T-cell (primary cell): ENCODE measurements at regions of chr3 and their contacts with region 1.

Region 1: DNA sequence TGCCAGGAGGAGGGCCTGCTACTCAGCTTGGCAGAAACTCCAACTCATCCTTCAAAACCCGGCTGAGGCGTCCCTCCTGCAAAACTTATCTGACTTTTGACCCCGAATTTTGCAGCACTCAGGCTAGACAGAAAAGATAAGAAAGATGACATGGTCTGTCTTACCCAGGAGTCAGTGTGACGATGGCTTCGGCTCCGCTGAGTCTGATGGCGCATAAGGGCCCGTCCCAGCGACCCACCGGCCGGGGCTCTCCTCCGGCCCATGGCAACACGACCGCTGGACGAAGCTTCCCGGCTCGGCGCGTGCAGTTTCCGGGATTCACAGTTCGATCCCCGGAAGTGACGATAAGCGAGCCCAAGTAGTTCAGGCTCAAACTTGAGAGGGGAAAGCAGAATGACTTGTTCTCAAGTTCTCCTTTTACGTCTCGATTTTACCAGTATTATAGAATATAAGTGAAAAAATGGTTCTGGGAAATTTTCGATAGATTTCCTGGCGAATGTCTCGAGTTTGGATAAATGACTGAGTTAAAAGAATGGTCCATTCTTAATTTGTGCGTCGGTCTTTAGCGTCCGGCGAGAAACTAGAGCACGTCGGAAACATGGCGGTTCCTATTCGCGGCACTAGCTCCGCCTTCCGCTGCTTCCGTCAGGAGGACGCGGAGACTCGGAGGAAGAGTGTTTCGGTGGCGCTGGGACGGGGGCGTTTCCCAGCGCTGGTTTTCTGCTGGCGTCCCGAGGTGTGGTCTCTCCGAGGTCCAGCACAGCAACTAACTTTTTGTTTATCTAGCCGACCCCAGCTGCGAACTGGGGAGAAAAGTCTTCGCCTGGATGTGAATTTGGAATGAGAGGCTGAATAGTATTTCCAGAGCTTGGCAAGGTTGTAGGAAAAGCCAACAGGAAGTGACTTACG is at the start of gene LSG1:
- DNase-seq: peak; percentile 77 to 97 (median 87)
- ATAC-seq: peak; percentile 95 to 96 (median 96)
- H3K4me3 ChIP-seq: peak within 1 kb of the TSS; percentile 68 to 95
- H3K4me3 Mint-ChIP-seq: peak within 1 kb of the TSS; percentile 98 to 99 (median 99)
- H3K27ac ChIP-seq: peak within 1 kb of the TSS; percentile 90
- H3K27ac Mint-ChIP-seq: peak within 1 kb of the TSS; percentile 98 to 99
- H3K4me1 ChIP-seq: peaks cover 10 to 14% of the 10 kb centered on the region in 2 experiments
- H3K4me1 Mint-ChIP-seq: peaks cover 39 to 45% (median 42%) of the 10 kb centered on the region in 3 donors
- H3K27me3 ChIP-seq: no peaks in the 10 kb centered on the region
- H3K27me3 Mint-ChIP-seq: peaks cover 0 to 5% of the 10 kb centered on the region in 2 donors
- total RNA-seq, gene LSG1: 40.0 to 83.5 (median 49.5) TPM

Region 2: DNA sequence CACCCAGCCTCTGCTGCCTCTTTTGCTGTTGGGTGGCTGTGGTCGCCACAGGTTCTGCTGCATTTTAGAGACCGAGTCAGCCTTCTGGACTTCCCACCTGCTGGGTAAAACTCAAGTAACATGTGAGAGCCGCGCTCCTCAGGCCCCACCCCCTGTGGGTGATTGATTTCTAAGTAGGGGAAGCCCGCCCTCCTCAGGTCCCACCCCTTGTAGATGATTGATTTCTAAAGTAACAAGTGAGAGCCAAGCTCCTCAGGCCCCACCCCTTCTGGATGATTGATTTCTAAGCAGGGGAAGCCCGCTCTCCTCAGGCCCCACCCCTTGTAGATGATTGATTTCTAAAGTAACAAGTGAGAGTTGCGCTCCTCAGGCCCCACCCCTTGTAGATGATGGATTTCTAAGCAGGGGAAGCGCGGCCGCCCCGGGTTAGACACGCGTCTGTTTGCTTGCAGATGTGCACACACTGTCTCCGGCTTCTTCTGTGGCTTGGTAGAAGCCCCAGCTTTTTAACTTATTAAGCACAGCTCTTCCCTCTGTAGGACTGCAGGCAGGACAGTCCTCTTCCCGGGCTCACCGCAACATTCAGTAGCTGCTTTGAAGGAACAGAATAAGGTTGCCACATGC is 97.0 kb after region 1 on chr3:
- CTCF ChIA-PET with region 1: interaction called in 1 of 2 experiments, 16 read pairs
- POLR2A ChIA-PET with region 1: no interaction called
- DNase-seq: peak; percentile 79 to 97 (median 92)
- ATAC-seq: peak; percentile 96 to 98 (median 98)
- H3K4me3 ChIP-seq: peak overlapping the region; percentile 38 to 54
- H3K4me3 Mint-ChIP-seq: peak overlapping the region; percentile 81 to 84 (median 83)
- H3K27ac ChIP-seq: peak overlapping the region; percentile 79
- H3K27ac Mint-ChIP-seq: peak overlapping the region; percentile 93 to 94
- H3K4me1 ChIP-seq: peaks cover 4 to 10% of the 10 kb centered on the region in 2 experiments
- H3K4me1 Mint-ChIP-seq: peaks cover 21 to 30% (median 25%) of the 10 kb centered on the region in 3 donors
- H3K27me3 ChIP-seq: peaks cover 0 to 19% of the 10 kb centered on the region in 2 experiments
- H3K27me3 Mint-ChIP-seq: peaks cover 8 to 11% of the 10 kb centered on the region in 2 donors

Region 3: GRCh38 chr3:195259475-195260279 is 587.5 kb after region 1 on chr3:
- CTCF ChIA-PET with region 1: interaction called, 7 to 12 read pairs
- POLR2A ChIA-PET with region 1: interaction called in 1 of 2 experiments, 3 read pairs
- DNase-seq: peak; percentile 75 to 93 (median 84)
- ATAC-seq: peak; percentile 77 to 91 (median 79)
- H3K4me3 ChIP-seq: peak overlapping the region; percentile 52 to 73
- H3K4me3 Mint-ChIP-seq: peak overlapping the region; percentile 56 to 81 (median 63)
- H3K27ac ChIP-seq: peak overlapping the region; percentile 91
- H3K27ac Mint-ChIP-seq: peak overlapping the region; percentile 90 to 91
- H3K4me1 ChIP-seq: peaks cover 8 to 28% of the 10 kb centered on the region in 2 experiments
- H3K4me1 Mint-ChIP-seq: peaks cover 21 to 24% (median 22%) of the 10 kb centered on the region in 3 donors
- H3K27me3 ChIP-seq: no peaks in the 10 kb centered on the region
- H3K27me3 Mint-ChIP-seq: no peaks in the 10 kb centered on the region